ENCODE measurements at regions of chr3 and their contacts with region 1.

Region 1: DNA sequence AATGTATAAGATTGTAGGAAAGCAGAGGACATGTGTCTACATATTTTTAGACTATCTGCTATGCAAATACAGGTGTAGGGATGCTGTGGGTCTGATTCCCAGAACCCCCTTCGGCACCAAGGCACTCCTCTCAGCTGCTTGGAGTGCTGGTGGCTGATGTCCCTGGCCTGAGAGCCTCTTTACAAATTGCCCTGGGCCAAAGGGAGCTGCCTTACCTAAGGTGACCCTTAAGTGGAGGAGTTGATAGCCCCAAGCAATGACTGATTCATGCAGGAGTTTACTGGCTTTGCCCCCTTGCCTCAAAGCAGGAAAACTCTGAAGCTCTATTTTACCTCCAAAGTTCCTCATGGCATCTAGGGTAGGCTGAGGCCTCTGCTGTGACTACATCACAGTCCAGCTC is 83.0 kb downstream of the ZNF385D start:
- DNase-seq: no peak
- ATAC-seq: no peak
- H3K4me3 ChIP-seq: no peak overlapping the region
- H3K27ac ChIP-seq: no peak overlapping the region
- H3K4me1 ChIP-seq: peaks cover 0 to 21% (median 0%) of the 10 kb centered on the region in 12 donors
- H3K27me3 ChIP-seq: no peaks in the 10 kb centered on the region
- CTCF ChIP-seq: no peak
- POLR2A ChIP-seq: no peak

Region 2: GRCh38 chr3:21654662-21655061 is 13.3 kb before region 1 on chr3:
- intact Hi-C with region 1: loop called in 1 of 10 experiments (anchors 2 kb)
- DNase-seq: no peak
- ATAC-seq: no peak
- H3K4me3 ChIP-seq: no peak overlapping the region
- H3K27ac ChIP-seq: no peak overlapping the region
- H3K4me1 ChIP-seq: no peaks in the 10 kb centered on the region
- H3K27me3 ChIP-seq: no peaks in the 10 kb centered on the region
- CTCF ChIP-seq: no peak
- POLR2A ChIP-seq: no peak

Measured in heart left ventricle (tissue), 16 donors.